CD14-positive monocyte (primary cell): ENCODE measurements at regions of chr6 and their contacts with region 1.

Region 1: DNA sequence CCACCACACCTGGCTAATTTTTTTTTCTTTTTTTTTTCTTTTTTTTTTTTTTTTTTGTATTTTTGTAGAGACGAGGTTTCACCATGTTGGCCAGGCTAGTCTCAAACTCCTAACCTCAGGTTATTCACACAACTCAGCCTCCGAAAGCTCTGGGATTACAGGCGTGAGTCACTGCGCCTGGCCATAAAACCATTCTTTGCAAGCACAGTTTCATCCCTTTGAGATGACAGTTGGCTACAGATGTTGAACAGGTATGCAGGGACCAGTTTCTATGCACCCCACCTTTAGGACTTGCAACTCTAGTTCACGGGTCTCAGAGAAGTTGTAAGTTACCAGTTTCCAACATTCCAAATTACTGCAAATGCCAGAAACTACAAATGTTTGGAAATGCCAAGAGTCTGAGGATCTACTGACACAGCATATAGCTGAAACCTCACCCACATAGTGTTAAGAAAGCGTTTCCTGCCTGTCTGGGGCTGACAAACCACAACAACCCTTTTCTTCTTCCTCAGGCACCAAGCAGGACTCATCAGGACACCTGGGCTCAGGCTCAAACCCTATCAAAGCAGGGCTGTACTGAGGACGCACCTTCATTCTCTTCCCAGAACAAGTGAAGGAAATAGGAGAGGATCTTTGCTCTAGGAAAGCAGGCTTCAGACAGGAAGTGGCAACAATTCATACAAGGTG is 22.9 kb downstream of the ARHGAP18 start:
- DNase-seq: peak; percentile 72 to 88 (median 77)
- H3K4me3 ChIP-seq: peak overlapping the region in 1 of 3 experiments; percentile 36
- H3K4me3 Mint-ChIP-seq: peak overlapping the region in 1 of 2 donors; percentile 60
- H3K27ac ChIP-seq: peak overlapping the region; percentile 52 to 93
- H3K27ac Mint-ChIP-seq: peak overlapping the region; percentile 88 to 99 (median 99)
- H3K4me1 ChIP-seq: peaks cover 63 to 78% of the 10 kb centered on the region in 2 donors
- H3K4me1 Mint-ChIP-seq: peaks cover 76% of the 10 kb centered on the region
- H3K27me3 ChIP-seq: no peaks in the 10 kb centered on the region
- H3K27me3 Mint-ChIP-seq: peaks cover 0 to 2% (median 0%) of the 10 kb centered on the region in 3 donors
- CTCF ChIP-seq: no peak

Region 2: GRCh38 chr6:129490521-129491245 is 196.4 kb before region 1 on chr6:
- intact Hi-C with region 1: loop called in 1 of 2 experiments (anchors 2 kb)
- DNase-seq: peak; percentile 92 to 98 (median 97)
- H3K4me3 ChIP-seq: peak overlapping the region; percentile 55 to 94 (median 68)
- H3K4me3 Mint-ChIP-seq: peak overlapping the region; percentile 68 to 92
- H3K27ac ChIP-seq: peak overlapping the region; percentile 84 to 100
- H3K27ac Mint-ChIP-seq: peak overlapping the region; percentile 99 to 100 (median 99)
- H3K4me1 ChIP-seq: peaks cover 18 to 19% of the 10 kb centered on the region in 2 donors
- H3K4me1 Mint-ChIP-seq: peaks cover 21% of the 10 kb centered on the region
- H3K27me3 ChIP-seq: no peaks in the 10 kb centered on the region
- H3K27me3 Mint-ChIP-seq: no peaks in the 10 kb centered on the region
- CTCF ChIP-seq: no peak

Region 3: GRCh38 chr6:129835691-129836090 is 148.6 kb after region 1 on chr6:
- intact Hi-C with region 1: no loop called
- DNase-seq: no peak
- H3K4me3 ChIP-seq: no peak overlapping the region
- H3K4me3 Mint-ChIP-seq: no peak overlapping the region
- H3K27ac ChIP-seq: no peak overlapping the region
- H3K27ac Mint-ChIP-seq: no peak overlapping the region
- H3K4me1 ChIP-seq: no peaks in the 10 kb centered on the region
- H3K4me1 Mint-ChIP-seq: no peaks in the 10 kb centered on the region
- H3K27me3 ChIP-seq: no peaks in the 10 kb centered on the region
- H3K27me3 Mint-ChIP-seq: no peaks in the 10 kb centered on the region
- CTCF ChIP-seq: no peak

Region 4: GRCh38 chr6:130697995-130698535 is 1011.0 kb after region 1 on chr6:
- intact Hi-C with region 1: no loop called
- DNase-seq: no peak
- H3K4me3 ChIP-seq: no peak overlapping the region
- H3K4me3 Mint-ChIP-seq: no peak overlapping the region
- H3K27ac ChIP-seq: no peak overlapping the region
- H3K27ac Mint-ChIP-seq: no peak overlapping the region
- H3K4me1 ChIP-seq: no peaks in the 10 kb centered on the region
- H3K4me1 Mint-ChIP-seq: no peaks in the 10 kb centered on the region
- H3K27me3 ChIP-seq: no peaks in the 10 kb centered on the region
- H3K27me3 Mint-ChIP-seq: peaks cover 2 to 4% (median 3%) of the 10 kb centered on the region in 3 donors
- CTCF ChIP-seq: peak; percentile 47